Heart left ventricle (tissue), 16 donors: ENCODE measurements at regions of chr1 and their contacts with region 1.

Region 1: DNA sequence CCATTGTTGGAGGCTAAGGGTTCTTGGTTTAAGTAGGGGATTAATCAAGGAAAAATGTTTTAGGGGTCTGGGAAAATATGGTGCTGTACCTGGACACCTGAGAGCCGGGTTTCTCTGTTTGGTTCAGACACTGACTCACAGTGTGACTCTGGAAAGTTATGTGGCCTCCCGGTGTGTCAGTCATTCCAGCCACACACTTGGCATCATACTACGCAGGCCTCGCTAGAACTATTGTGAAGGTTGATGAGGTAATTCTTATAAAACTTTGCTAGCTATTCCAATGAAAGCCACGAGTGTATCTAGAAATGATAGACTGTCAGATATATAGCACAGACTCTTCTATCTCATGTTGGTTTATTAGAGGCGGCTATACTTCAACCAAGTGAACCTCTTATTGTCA is 4.8 kb upstream of the CAMSAP2 start:
- DNase-seq: no peak
- ATAC-seq: no peak
- H3K4me3 ChIP-seq: no peak overlapping the region
- H3K27ac ChIP-seq: no peak overlapping the region
- H3K4me1 ChIP-seq: peaks cover 0 to 16% (median 5%) of the 10 kb centered on the region in 12 donors
- H3K27me3 ChIP-seq: no peaks in the 10 kb centered on the region
- CTCF ChIP-seq: no peak
- POLR2A ChIP-seq: no peak

Region 2: DNA sequence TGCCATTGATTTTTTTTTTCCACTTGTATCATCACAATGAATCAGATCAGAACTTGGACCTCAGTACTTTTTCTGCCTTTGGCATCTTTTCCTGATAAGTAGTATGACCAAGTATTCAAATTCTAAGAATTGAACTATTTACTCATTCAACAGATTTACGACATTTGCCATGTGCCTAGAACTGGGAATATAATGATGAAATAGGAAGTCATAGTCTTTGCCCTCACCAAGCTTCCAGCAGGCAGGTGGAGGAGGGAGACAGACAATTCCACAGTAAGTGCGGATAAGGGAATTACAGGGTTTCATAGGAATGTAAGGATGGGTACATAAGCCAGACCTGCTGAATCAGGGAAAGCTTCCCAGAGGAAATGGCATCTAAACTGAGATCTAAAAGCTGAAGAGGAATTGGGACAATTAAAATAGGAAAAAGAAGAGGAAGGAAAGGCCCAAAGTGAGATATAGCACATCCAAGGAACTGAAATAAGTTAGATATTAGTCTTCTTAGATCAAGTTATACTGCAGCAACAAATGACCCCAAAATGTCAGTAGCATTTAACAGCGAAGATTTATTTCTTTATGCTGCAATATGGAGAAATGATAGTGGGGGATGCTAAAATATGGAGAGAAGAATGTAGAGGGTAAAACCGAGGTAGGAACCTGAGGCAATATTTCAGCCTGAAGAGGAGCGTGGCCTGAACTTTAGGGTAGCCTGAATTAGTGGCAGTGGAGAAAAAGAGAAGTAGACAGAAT is 58.9 kb before region 1 on chr1:
- intact Hi-C with region 1: loop called in 5 of 10 experiments (anchors 1 to 5 kb)
- DNase-seq: no peak
- ATAC-seq: no peak
- H3K4me3 ChIP-seq: no peak overlapping the region
- H3K27ac ChIP-seq: no peak overlapping the region
- H3K4me1 ChIP-seq: peaks cover 0 to 12% (median 8%) of the 10 kb centered on the region in 12 donors
- H3K27me3 ChIP-seq: no peaks in the 10 kb centered on the region
- CTCF ChIP-seq: no peak
- POLR2A ChIP-seq: no peak

Region 3: GRCh38 chr1:200684015-200684414 is 49.9 kb before region 1 on chr1:
- intact Hi-C with region 1: loop called in 2 of 10 experiments (anchors 5 kb)
- DNase-seq: no peak
- ATAC-seq: no peak
- H3K4me3 ChIP-seq: no peak overlapping the region
- H3K27ac ChIP-seq: no peak overlapping the region
- H3K4me1 ChIP-seq: peaks cover 0 to 5% (median 0%) of the 10 kb centered on the region in 12 donors
- H3K27me3 ChIP-seq: no peaks in the 10 kb centered on the region
- CTCF ChIP-seq: no peak
- POLR2A ChIP-seq: no peak